ENCODE measurements at regions of chr7 and their contacts with region 1.

Region 1: GRCh38 chr7:27143023-27143949 is at the start of gene HOXA5:
- DNase-seq: peak; percentile 97
- H3K4me3 ChIP-seq: peak within 1 kb of the TSS; percentile 29 to 84 (median 65)
- H3K27ac ChIP-seq: peak within 1 kb of the TSS; percentile 82
- H3K4me1 ChIP-seq: peaks cover 73% of the 10 kb centered on the region
- H3K27me3 ChIP-seq: no peaks in the 10 kb centered on the region
- CTCF ChIP-seq: peak; percentile 83 to 96
- POLR2A ChIP-seq: peak; percentile 86
- total RNA-seq, gene HOXA5: 18.8 and 21.4 TPM in 2 replicates

Region 2: GRCh38 chr7:25857376-25857921 is 1285.8 kb before region 1 on chr7:
- CTCF ChIA-PET with region 1: no interaction called
- POLR2A ChIA-PET with region 1: no interaction called
- dilution Hi-C with region 1: no loop called
- intact Hi-C with region 1: loop called (anchors 2 kb)
- DNase-seq: no peak
- H3K4me3 ChIP-seq: peak overlapping the region in 2 of 3 experiments; percentile 28
- H3K27ac ChIP-seq: peak overlapping the region; percentile 31
- H3K4me1 ChIP-seq: peaks cover 18% of the 10 kb centered on the region
- H3K27me3 ChIP-seq: peaks cover 46 to 47% of the 10 kb centered on the region in 2 experiments
- CTCF ChIP-seq: no peak
- POLR2A ChIP-seq: no peak

Region 3: DNA sequence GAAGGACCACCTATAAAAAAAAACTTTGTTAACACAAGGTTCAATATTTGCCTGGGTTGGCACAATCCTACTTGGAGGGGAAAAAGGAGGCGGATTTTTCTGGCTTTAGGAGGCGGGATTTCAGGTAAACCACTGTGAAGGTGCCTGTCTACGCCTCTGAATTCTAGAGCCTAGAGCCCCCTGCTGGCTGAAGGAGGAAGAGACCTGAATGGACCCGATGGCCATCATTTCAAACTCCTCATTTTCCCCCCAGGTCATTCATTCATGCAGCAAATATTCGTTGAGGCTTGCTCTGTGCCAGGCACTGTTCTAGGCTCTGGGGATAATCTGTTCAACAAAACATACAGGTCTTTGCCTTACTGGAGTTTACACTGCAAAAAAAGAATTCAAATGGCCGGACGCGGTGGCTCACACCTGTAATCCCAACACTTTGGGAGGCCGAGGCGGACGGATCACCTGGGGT is 1081.6 kb before region 1 on chr7:
- CTCF ChIA-PET with region 1: no interaction called
- POLR2A ChIA-PET with region 1: no interaction called
- dilution Hi-C with region 1: no loop called
- intact Hi-C with region 1: no loop called
- DNase-seq: peak; percentile 49
- H3K4me3 ChIP-seq: no peak overlapping the region
- H3K27ac ChIP-seq: no peak overlapping the region
- H3K4me1 ChIP-seq: no peaks in the 10 kb centered on the region
- H3K27me3 ChIP-seq: peaks cover 8 to 11% of the 10 kb centered on the region in 2 experiments
- CTCF ChIP-seq: peak; percentile 78 to 86
- POLR2A ChIP-seq: no peak

Region 4: GRCh38 chr7:26449175-26450165 is 693.8 kb before region 1 on chr7:
- CTCF ChIA-PET with region 1: no interaction called
- POLR2A ChIA-PET with region 1: no interaction called
- dilution Hi-C with region 1: no loop called
- intact Hi-C with region 1: loop called (anchors 5 kb)
- DNase-seq: peak; percentile 96
- H3K4me3 ChIP-seq: no peak overlapping the region
- H3K27ac ChIP-seq: peak overlapping the region; percentile 80
- H3K4me1 ChIP-seq: peaks cover 37% of the 10 kb centered on the region
- H3K27me3 ChIP-seq: no peaks in the 10 kb centered on the region
- CTCF ChIP-seq: no peak
- POLR2A ChIP-seq: peak; percentile 54

Region 5: GRCh38 chr7:26686448-26686981 is 456.8 kb before region 1 on chr7:
- CTCF ChIA-PET with region 1: interaction called, 68 read pairs
- POLR2A ChIA-PET with region 1: no interaction called
- dilution Hi-C with region 1: no loop called
- intact Hi-C with region 1: loop called (anchors 1 kb)
- DNase-seq: peak; percentile 90
- H3K4me3 ChIP-seq: no peak overlapping the region
- H3K27ac ChIP-seq: peak overlapping the region; percentile 78
- H3K4me1 ChIP-seq: peaks cover 91% of the 10 kb centered on the region
- H3K27me3 ChIP-seq: no peaks in the 10 kb centered on the region
- CTCF ChIP-seq: peak; percentile 23 to 35
- POLR2A ChIP-seq: no peak

Region 6: DNA sequence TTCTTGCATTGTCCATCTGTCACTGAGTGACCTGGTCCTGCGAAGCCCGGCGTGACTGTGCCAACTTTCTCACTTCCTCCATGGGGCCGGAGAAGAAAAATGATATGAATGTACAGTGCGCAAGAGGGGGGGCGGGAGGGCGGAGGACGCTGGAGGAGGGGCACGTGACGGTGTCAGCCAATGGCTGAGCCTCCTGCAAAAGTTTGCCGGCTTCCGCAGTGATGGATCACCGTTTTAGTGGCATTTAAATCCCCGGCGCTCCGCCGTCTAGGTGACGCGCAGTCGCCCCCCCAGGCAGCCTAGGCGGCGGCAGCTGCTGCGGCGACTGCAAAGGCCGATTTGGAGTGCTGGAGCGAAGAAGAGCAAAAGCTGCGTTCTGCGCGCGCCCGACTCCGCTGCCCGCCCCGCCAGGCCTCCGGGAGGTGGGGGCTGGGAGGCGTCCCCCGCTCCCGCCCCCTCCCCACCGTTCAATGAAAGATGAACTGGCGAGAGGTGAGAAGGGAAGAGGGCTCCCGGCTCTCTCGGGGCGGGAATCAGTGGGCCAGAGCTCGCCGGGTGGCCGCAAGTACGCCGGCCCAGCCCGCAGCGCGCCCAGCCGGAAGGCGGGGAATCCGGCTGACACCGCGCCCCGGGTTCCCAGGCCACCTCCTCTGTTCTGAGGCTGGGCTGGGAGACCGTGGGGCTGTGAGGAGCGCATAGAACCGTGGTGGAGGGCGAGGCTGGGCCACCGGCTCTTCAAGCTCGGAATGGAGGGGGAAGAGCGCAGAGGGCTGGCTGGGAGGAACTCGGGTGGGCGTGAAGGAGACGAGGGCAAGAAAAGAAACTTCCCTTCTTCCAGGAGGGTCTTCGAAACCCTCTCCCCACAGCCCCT is 47.2 kb before region 1 on chr7 and contains the start of gene HOXA1:
- CTCF ChIA-PET with region 1: interaction called, 14 read pairs
- POLR2A ChIA-PET with region 1: interaction called, 3 read pairs
- dilution Hi-C with region 1: no loop called
- intact Hi-C with region 1: no loop called
- DNase-seq: peak; percentile 95
- H3K4me3 ChIP-seq: peak within 1 kb of the TSS; percentile 80 to 92 (median 86)
- H3K27ac ChIP-seq: peak within 1 kb of the TSS; percentile 93
- H3K4me1 ChIP-seq: peaks cover 48% of the 10 kb centered on the region
- H3K27me3 ChIP-seq: no peaks in the 10 kb centered on the region
- CTCF ChIP-seq: peak in 1 of 2 donors; percentile 10
- POLR2A ChIP-seq: peak; percentile 92
- total RNA-seq, gene HOXA1: 1.5 and 2.4 TPM in 2 replicates

Region 7: DNA sequence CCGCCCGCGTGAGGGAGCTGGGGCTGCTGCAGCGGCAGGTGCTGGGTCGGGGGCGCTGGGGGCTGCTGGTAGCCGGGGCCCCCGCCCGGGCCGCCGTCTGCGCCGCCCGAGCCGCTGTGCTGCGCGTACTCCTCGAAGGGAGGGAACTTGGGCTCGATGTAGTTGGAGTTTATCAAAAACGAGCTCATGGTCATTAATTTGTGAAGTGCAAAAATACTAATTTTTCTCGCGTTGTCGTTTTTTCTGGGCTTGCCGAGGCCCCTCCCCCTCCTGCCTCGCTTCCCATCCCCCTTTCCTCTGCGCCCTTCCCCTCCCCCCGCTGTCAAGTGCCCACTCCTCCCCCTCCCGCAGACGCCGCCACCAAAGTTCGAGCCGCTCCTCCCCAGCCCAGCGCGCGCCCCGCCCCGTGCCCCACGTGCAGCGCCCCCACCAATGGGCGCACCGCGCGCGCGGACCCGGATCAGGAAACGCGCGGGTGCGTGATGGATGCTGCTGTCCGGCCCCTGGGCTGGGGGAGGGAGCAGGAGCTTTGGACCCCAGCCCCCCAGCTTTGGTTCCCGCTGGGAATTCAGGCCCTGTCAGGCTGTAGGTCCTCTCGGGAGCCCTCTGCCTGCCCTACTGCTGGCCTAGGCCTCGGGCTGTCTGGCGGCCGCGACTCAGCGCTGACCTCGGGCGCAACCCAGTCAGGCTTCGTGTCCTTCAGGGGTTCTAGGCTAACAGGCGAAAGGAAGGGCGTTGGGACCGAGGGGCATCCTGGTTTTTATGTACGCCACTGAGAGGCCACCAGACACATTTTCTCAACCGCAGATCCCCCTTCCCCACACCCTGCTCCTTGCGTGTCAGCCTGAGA is 12.5 kb before region 1 on chr7 and contains the start of gene HOXA4:
- CTCF ChIA-PET with region 1: interaction called, 11 read pairs
- POLR2A ChIA-PET with region 1: interaction called, 3 read pairs
- dilution Hi-C with region 1: no loop called
- intact Hi-C with region 1: no loop called
- DNase-seq: peak; percentile 89
- H3K4me3 ChIP-seq: peak within 1 kb of the TSS; percentile 36 to 60 (median 58)
- H3K27ac ChIP-seq: peak within 1 kb of the TSS; percentile 67
- H3K4me1 ChIP-seq: peaks cover 66% of the 10 kb centered on the region
- H3K27me3 ChIP-seq: no peaks in the 10 kb centered on the region
- CTCF ChIP-seq: no peak
- POLR2A ChIP-seq: peak; percentile 57
- total RNA-seq, gene HOXA4: 7.5 and 8.1 TPM in 2 replicates

Region 8: DNA sequence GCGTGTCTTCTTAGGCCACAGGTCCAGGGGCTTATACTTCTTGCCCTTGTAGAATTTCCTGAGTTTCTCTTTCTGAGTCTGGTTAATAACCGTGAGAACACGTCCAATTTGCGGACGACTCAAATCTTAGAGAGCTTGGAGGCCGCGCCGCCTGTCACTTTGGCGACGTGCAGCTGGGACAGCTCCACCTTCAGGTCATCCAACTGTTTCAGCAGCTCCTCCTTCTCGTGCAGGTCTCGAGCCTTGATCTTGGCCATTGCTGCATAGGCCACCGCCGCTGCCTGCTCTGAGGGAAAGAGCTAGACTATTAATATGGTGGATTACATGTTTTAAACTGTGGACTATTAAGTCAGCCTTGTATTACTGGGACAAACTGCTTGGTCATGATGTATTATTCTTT is 126.2 kb after region 1 on chr7:
- CTCF ChIA-PET with region 1: no interaction called
- POLR2A ChIA-PET with region 1: no interaction called
- dilution Hi-C with region 1: no loop called
- intact Hi-C with region 1: no loop called
- DNase-seq: no peak
- H3K4me3 ChIP-seq: no peak overlapping the region
- H3K27ac ChIP-seq: no peak overlapping the region
- H3K4me1 ChIP-seq: no peaks in the 10 kb centered on the region
- H3K27me3 ChIP-seq: peaks cover 0 to 2% of the 10 kb centered on the region in 2 experiments
- CTCF ChIP-seq: no peak
- POLR2A ChIP-seq: no peak